Activated CD8-positive, alpha-beta memory T cell treated with anti-CD3 and anti-CD28 coated beads, Interleukin-2, amount 10 ng/mL, durations not matched to agents 7 days and 5 days (primary cell): ENCODE measurements at regions of chr4 and their contacts with region 1.

Region 1: GRCh38 chr4:147019061-147019460 is 73.4 kb upstream of the TTC29 start:
- DNase-seq: peak; percentile 60
- ATAC-seq: peak; percentile 57
- H3K4me3 Mint-ChIP-seq: no peak overlapping the region
- H3K27ac Mint-ChIP-seq: no peak overlapping the region
- H3K4me1 Mint-ChIP-seq: no peaks in the 10 kb centered on the region
- H3K27me3 Mint-ChIP-seq: peaks cover 17% of the 10 kb centered on the region

Region 2: DNA sequence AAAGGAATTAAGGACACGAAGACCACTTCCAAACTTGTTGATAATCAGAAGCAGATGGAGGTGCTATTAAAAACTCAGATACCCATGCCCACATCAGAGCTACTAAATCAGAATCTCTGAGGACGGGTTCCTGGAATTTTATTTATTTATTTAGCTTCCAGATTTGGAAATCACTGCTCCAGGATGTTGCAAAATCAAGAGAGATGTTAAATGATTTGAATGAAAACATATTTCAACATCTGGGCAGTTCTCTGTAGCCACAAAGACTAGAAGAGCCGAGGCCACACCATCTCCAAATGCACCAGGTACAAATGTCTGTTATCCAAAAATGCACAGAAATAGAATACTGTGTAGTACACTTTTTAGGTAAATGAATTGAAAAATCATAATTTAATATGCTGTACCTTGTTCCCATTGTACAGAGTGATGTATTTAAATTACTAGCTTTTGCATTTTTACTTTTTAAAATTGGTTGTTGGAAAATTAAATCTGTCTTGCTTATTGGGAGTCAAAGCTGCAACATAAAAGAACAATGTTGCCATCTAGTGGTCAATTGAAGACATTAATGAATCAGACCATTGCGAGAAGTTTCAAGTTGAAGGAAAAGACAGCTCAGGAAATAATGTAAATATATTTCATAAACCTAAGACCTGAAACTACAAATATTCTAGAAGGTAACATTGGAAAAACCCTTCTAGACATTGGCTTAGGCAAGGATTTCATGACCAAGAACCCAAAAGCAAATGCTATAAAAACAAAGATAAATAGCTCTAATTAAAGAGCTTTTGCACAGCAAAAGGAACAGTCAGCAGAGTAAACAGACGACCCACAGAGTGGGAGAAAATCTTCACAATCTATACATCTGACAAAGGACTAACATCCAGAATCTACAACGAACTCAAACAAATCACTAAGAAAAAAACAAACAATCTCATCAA is 77.9 kb after region 1 on chr4:
- CTCF ChIA-PET with region 1: interaction called, 43 read pairs
- DNase-seq: no peak
- ATAC-seq: no peak
- H3K4me3 Mint-ChIP-seq: no peak overlapping the region
- H3K27ac Mint-ChIP-seq: no peak overlapping the region
- H3K4me1 Mint-ChIP-seq: no peaks in the 10 kb centered on the region
- H3K27me3 Mint-ChIP-seq: peaks cover 21% of the 10 kb centered on the region